ENCODE measurements at regions of chr16 and their contacts with region 1.

Region 1: GRCh38 chr16:69910964-69911363 is 40.2 kb upstream of the CLEC18A start:
- DNase-seq: no peak
- ATAC-seq: no peak
- H3K4me3 ChIP-seq: no peak overlapping the region
- H3K4me3 Mint-ChIP-seq: no peak overlapping the region
- H3K27ac ChIP-seq: no peak overlapping the region
- H3K27ac Mint-ChIP-seq: no peak overlapping the region
- H3K4me1 ChIP-seq: no peaks in the 10 kb centered on the region
- H3K4me1 Mint-ChIP-seq: no peaks in the 10 kb centered on the region
- H3K27me3 ChIP-seq: no peaks in the 10 kb centered on the region
- H3K27me3 Mint-ChIP-seq: no peaks in the 10 kb centered on the region
- CTCF ChIP-seq: no peak

Region 2: DNA sequence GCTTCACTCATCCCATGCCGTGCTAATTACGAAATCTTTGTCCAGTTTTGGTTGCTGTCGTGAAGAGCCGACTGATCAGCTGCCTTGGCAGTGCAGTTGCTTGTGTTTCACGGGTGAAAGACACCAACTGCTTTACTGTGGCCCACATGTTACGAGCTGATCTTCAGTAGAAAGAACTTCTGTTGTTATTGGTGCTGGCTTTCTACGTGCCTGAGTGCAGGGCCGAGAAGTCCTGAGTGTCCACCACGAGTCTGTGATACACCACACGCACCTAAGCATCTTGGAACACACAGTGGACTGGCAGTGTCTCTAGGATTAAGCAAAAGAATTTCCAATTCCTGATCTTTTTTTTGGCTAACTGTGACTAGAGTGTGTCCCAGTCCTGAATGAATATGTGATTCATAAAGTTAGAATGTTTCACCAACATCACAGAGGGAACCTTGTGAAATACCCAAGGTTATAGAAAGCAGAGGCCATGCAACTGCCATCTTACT is 30.3 kb before region 1 on chr16:
- CTCF ChIA-PET with region 1: interaction called, 4 read pairs
- POLR2A ChIA-PET with region 1: no interaction called
- intact Hi-C with region 1: loop called (anchors 1 kb)
- DNase-seq: no peak
- ATAC-seq: no peak
- H3K4me3 ChIP-seq: no peak overlapping the region
- H3K4me3 Mint-ChIP-seq: no peak overlapping the region
- H3K27ac ChIP-seq: no peak overlapping the region
- H3K27ac Mint-ChIP-seq: no peak overlapping the region
- H3K4me1 ChIP-seq: no peaks in the 10 kb centered on the region
- H3K4me1 Mint-ChIP-seq: no peaks in the 10 kb centered on the region
- H3K27me3 ChIP-seq: no peaks in the 10 kb centered on the region
- H3K27me3 Mint-ChIP-seq: no peaks in the 10 kb centered on the region
- CTCF ChIP-seq: no peak

Region 3: GRCh38 chr16:69890892-69891282 is 20.1 kb before region 1 on chr16:
- CTCF ChIA-PET with region 1: no interaction called
- POLR2A ChIA-PET with region 1: no interaction called
- intact Hi-C with region 1: no loop called
- DNase-seq: no peak
- ATAC-seq: no peak
- H3K4me3 ChIP-seq: no peak overlapping the region
- H3K4me3 Mint-ChIP-seq: no peak overlapping the region
- H3K27ac ChIP-seq: no peak overlapping the region
- H3K27ac Mint-ChIP-seq: no peak overlapping the region
- H3K4me1 ChIP-seq: no peaks in the 10 kb centered on the region
- H3K4me1 Mint-ChIP-seq: no peaks in the 10 kb centered on the region
- H3K27me3 ChIP-seq: no peaks in the 10 kb centered on the region
- H3K27me3 Mint-ChIP-seq: no peaks in the 10 kb centered on the region
- CTCF ChIP-seq: no peak

Measured in B cell (primary cell).